Mammary epithelial cell (primary cell): ENCODE measurements at regions of chr3 and their contacts with region 1.

Region 1: DNA sequence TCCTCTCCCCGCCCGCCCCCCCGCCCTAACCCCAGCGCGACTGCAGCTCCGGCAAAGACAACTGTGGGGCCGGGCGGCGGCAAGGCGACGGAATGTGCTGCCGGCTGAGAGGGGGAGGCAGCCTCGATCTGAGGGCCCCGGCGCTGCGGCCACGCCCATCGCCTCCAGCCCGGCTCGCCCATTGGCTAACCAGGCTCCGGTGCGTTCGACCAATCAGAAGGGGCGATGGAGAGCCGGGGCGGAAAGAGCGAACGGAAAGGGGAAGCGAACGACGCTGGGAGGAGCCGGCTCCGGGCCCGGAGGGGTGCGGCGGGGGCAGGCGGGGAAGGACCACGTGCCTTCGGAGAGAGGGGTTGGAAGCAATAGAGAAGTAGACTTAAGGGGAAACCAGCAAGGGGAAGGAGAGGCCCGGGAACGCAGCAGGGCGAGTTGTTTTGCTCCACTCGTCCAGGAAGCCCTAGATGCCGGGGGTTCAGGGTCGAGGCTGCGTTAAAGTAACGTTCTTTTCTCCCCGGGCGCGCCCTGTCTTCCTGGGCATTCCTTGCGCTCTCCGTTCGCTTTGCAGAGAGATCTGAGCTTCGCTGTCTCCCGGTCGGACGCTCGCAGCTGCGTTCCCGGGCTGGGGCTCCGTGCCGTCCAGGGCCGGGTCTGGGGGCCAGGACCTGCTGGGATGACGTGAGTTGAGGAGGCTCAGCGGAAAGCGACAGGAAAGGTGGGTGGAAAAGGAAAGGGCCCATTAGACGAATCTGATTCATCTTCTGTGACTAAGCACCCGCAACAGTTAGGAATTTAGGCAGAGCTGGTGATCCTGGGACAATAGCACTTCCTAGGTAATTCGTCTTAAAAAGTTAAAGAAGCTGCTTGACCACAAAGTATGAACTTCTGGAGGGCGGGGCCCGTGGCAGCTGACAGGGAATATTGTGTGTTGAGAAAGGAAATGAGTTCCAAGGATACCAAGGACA is at the start of gene KPNA4:
- DNase-seq: peak; percentile 97
- H3K4me3 ChIP-seq: peak within 1 kb of the TSS; percentile 72 to 91 (median 85)
- H3K27ac ChIP-seq: peak within 1 kb of the TSS; percentile 97
- H3K4me1 ChIP-seq: peaks cover 7% of the 10 kb centered on the region
- H3K27me3 ChIP-seq: no peaks in the 10 kb centered on the region
- CTCF ChIP-seq: no peak
- total RNA-seq, gene KPNA4: 54.0 to 104 TPM

Region 2: DNA sequence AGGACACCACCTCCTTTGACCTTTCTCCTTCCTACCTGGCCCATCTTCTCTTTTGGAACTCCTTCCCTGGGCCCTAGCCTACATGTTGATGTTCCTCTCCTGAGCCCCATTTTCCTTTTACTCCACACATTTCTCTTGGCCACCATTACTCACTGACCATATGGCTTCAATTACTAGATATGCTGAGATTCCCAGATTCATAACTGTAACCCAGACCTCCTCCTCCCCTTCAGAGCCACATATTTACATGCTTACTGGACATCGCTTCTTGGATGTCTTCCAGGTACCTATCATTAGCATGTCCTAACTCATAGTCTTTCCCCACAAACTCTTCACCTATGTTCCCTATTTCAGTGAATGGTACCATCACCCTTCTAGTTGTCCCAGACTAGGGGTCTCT is 91.7 kb before region 1 on chr3:
- CTCF ChIA-PET with region 1: no interaction called
- dilution Hi-C with region 1: no loop called
- in situ Hi-C with region 1: no loop called
- intact Hi-C with region 1: no loop called
- DNase-seq: peak; percentile 85
- H3K4me3 ChIP-seq: no peak overlapping the region
- H3K27ac ChIP-seq: no peak overlapping the region
- H3K4me1 ChIP-seq: peaks cover 36% of the 10 kb centered on the region
- H3K27me3 ChIP-seq: no peaks in the 10 kb centered on the region
- CTCF ChIP-seq: no peak

Region 3: DNA sequence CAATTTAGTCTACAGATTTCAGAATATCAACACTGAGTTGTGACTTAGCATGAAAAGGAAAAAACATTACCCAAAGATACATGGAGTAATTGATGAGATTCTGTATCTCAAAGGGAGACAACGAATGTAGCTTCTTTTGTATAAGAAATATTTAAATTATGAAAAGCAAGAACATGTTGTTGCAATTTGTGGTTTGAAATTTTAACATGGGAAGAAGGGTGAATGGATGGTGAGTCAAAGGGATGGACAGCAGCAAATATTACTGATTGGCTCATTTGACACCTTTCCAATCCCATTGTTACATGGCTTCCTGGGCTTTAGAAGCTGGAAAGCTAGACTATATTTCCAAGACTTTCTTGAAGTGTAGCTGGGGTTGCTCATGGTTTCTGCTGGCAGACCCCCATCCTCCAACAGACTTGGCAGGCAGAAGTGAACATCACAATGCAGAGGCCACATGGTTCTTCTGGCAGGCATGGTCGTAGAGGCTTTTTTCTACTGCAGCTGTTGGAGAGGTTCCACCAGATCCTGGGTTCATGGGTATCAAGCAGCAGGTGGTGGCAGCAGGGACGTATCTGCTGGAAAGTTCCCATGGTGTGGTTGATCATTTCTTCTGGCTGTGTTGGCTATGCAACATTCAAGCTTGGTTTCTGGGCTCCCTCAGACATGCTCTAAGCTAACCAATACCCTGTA is 46.8 kb after region 1 on chr3:
- CTCF ChIA-PET with region 1: no interaction called
- dilution Hi-C with region 1: no loop called
- in situ Hi-C with region 1: no loop called
- intact Hi-C with region 1: loop called (anchors 5 kb)
- DNase-seq: peak; percentile 50
- H3K4me3 ChIP-seq: no peak overlapping the region
- H3K27ac ChIP-seq: no peak overlapping the region
- H3K4me1 ChIP-seq: peaks cover 36% of the 10 kb centered on the region
- H3K27me3 ChIP-seq: no peaks in the 10 kb centered on the region
- CTCF ChIP-seq: no peak

Region 4: GRCh38 chr3:160754855-160755747 is 189.4 kb after region 1 on chr3:
- CTCF ChIA-PET with region 1: no interaction called
- dilution Hi-C with region 1: no loop called
- in situ Hi-C with region 1: loop called in 1 of 2 experiments (anchors 5 kb)
- intact Hi-C with region 1: loop called (anchors 2 kb)
- DNase-seq: peak; percentile 93
- H3K4me3 ChIP-seq: peak overlapping the region; percentile 63 to 68 (median 68)
- H3K27ac ChIP-seq: peak overlapping the region; percentile 67
- H3K4me1 ChIP-seq: peaks cover 8% of the 10 kb centered on the region
- H3K27me3 ChIP-seq: peaks cover 2% of the 10 kb centered on the region
- CTCF ChIP-seq: no peak

Region 5: GRCh38 chr3:161266731-161267166 is 701.0 kb after region 1 on chr3:
- CTCF ChIA-PET with region 1: no interaction called
- dilution Hi-C with region 1: no loop called
- in situ Hi-C with region 1: no loop called
- intact Hi-C with region 1: loop called (anchors 10 kb)
- DNase-seq: peak; percentile 77
- H3K4me3 ChIP-seq: no peak overlapping the region
- H3K27ac ChIP-seq: peak overlapping the region; percentile 70
- H3K4me1 ChIP-seq: peaks cover 35% of the 10 kb centered on the region
- H3K27me3 ChIP-seq: no peaks in the 10 kb centered on the region
- CTCF ChIP-seq: no peak

Region 6: GRCh38 chr3:161415497-161416251 is 850.0 kb after region 1 on chr3:
- CTCF ChIA-PET with region 1: no interaction called
- dilution Hi-C with region 1: no loop called
- in situ Hi-C with region 1: loop called in 1 of 2 experiments (anchors 10 kb)
- intact Hi-C with region 1: loop called (anchors 5 kb)
- DNase-seq: peak; percentile 85
- H3K4me3 ChIP-seq: peak overlapping the region in 1 of 3 experiments; percentile 21
- H3K27ac ChIP-seq: peak overlapping the region; percentile 97
- H3K4me1 ChIP-seq: peaks cover 39% of the 10 kb centered on the region
- H3K27me3 ChIP-seq: no peaks in the 10 kb centered on the region
- CTCF ChIP-seq: no peak